ENCODE measurements at regions of chr19 and their contacts with region 1.

Region 1: GRCh38 chr19:29687244-29687896 is 22.1 kb downstream of the PLEKHF1 start:
- DNase-seq: no peak
- ATAC-seq: peak; percentile 45

Region 2: GRCh38 chr19:29645911-29646310 is 41.5 kb before region 1 on chr19:
- intact Hi-C with region 1: loop called (anchors 5 kb)
- DNase-seq: peak; percentile 73
- ATAC-seq: peak; percentile 94

Region 3: DNA sequence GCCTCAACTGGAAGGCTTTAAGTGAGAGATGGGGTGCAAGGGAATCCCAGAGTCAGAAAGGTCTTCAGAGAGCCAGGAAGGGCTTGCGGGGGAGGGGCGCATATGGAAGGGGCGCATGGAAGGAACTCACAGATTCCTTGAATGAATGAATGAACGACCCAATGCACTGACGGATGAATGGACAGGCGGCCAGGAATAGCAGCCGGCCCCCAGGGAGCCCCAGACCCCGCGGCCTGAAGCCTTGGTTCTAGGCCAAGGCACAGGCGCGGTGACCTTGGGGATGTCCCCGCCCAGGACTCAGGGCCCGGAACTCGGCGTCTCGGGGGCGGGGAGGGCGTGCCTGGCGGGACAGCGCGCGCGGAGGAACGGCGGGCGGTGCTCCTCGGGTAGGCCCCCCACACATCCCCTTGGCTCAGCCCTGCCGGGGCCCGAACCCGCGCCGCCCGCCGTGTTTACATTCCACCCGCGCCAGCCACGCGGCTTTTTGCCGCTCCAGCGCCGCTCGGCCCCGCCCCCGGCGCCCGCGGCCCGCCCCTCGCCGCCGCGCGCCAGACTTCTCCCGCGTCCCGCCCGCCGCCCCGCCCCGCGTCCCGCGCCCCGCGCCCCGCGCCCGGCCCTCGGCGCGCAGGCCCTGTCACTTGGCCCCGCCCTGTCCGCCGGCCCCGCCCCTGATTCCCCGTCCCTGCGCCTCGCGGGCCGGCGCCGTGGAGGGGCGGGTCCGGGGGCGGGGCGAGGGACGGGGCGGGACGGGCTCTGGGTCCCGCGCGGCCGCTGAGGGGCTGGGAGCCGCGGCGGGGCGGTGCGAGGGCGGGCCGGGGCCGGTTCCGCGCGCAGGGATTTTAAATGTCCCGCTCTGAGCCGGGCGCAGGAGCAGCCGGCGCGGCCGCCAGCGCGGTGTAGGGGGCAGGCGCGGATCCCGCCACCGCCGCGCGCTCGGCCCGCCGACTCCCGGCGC is 124.0 kb after region 1 on chr19 and contains the start of gene CCNE1:
- intact Hi-C with region 1: no loop called
- DNase-seq: peak; percentile 97
- ATAC-seq: peak; percentile 99
- total RNA-seq, gene CCNE1: 3.1 TPM